Tibial artery (tissue), 4 donors: ENCODE measurements at regions of chr16 and their contacts with region 1.

Region 1: GRCh38 chr16:75206749-75207451 is at the start of gene CTRB2:
- DNase-seq: no peak
- H3K4me3 ChIP-seq: no peak within 1 kb of the TSS
- H3K27ac ChIP-seq: no peak within 1 kb of the TSS
- H3K4me1 ChIP-seq: no peaks in the 10 kb centered on the region
- H3K27me3 ChIP-seq: no peaks in the 10 kb centered on the region
- CTCF ChIP-seq: no peak

Region 2: DNA sequence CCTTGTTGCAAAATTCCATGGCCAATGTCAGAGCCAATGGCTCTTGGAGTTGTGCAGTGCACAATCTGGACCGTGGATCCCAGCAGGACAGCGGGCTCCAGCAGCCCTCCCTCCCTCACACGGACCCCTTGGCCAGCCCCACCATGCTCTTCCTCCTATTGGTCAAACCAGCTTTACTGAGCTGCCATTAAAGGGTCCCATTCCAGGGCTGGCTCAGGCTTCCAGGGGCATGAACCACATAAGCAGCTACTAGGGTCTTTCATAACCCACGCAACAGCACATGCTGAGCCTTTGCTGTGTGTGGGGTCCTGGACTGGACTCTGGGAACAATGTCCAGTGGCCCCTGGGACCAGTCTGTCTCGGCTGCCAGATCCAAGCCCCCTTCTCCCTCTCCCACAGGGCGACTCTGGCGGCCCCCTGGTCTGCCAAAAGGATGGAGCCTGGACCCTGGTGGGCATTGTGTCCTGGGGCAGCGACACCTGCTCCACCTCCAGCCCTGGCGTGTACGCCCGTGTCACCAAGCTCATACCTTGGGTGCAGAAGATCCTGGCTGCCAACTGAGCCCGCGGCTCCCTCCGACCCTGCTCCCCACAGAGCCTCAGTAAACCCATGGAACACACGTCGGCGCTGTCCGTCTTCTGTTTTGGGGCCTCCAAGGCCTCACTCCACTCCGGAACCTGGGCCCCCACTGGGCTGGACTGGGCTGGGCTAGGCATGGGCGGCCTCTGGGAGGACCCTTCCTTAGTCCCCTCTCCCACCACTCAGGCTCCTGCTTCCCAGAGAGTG is 17.6 kb after region 1 on chr16:
- intact Hi-C with region 1: loop called (anchors 2 kb)
- DNase-seq: peak in 1 of 2 donors; percentile 66
- H3K4me3 ChIP-seq: no peak overlapping the region
- H3K27ac ChIP-seq: no peak overlapping the region
- H3K4me1 ChIP-seq: peaks cover 0 to 9% (median 0%) of the 10 kb centered on the region in 4 donors
- H3K27me3 ChIP-seq: no peaks in the 10 kb centered on the region
- CTCF ChIP-seq: no peak

Region 3: DNA sequence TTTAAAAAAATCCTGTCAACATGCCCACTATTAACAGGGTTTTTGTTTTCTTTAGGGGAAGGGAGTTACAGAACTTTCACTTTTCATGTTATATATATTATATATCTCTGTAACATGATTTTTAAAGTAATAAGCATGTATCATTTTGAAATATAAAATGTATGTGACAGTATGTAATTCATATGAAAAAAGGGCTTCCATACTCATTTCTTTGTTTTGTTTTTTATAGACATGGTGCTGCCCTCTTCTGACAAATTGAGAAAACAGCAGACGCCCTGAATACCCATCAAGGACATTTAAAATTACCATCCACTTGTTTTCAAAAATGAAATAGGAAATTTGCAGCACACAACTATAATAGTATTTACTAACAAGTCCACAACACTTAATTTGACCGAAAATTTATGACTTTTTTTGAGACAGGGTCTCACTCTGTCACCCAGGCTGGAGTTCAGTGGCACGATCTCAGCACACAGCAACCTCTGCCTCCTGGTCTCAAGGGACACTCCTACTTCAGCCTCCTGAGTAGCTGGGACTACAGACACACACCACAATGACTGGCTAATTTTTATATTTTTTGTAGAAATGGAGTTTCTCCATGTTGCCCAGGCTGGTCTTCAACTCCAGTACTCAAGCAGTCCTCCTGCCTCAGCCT is 196.0 kb after region 1 on chr16:
- intact Hi-C with region 1: loop called (anchors 5 kb)
- DNase-seq: no peak
- H3K4me3 ChIP-seq: no peak overlapping the region
- H3K27ac ChIP-seq: peak overlapping the region; percentile 73 to 79
- H3K4me1 ChIP-seq: peaks cover 0 to 37% (median 9%) of the 10 kb centered on the region in 4 donors
- H3K27me3 ChIP-seq: no peaks in the 10 kb centered on the region
- CTCF ChIP-seq: peak; percentile 69 to 70